A673 (cell line): ENCODE measurements at regions of chr3 and their contacts with region 1.

Region 1: GRCh38 chr3:126134219-126134975 is 46.0 kb downstream of the ALDH1L1 start:
- DNase-seq: peak; percentile 79
- H3K4me3 ChIP-seq: no peak overlapping the region
- H3K27ac ChIP-seq: peak overlapping the region; percentile 44
- H3K4me1 ChIP-seq: peaks cover 14% of the 10 kb centered on the region
- H3K27me3 ChIP-seq: no peaks in the 10 kb centered on the region
- CTCF ChIP-seq: peak; percentile 83

Region 2: GRCh38 chr3:126197854-126198584 is 63.6 kb after region 1 on chr3:
- CTCF ChIA-PET with region 1: interaction called, 4 read pairs
- POLR2A ChIA-PET with region 1: no interaction called
- intact Hi-C with region 1: loop called (anchors 2 kb)
- DNase-seq: peak; percentile 91
- H3K4me3 ChIP-seq: no peak overlapping the region
- H3K27ac ChIP-seq: peak overlapping the region; percentile 8
- H3K4me1 ChIP-seq: peaks cover 37% of the 10 kb centered on the region
- H3K27me3 ChIP-seq: no peaks in the 10 kb centered on the region
- CTCF ChIP-seq: peak; percentile 91

Region 3: DNA sequence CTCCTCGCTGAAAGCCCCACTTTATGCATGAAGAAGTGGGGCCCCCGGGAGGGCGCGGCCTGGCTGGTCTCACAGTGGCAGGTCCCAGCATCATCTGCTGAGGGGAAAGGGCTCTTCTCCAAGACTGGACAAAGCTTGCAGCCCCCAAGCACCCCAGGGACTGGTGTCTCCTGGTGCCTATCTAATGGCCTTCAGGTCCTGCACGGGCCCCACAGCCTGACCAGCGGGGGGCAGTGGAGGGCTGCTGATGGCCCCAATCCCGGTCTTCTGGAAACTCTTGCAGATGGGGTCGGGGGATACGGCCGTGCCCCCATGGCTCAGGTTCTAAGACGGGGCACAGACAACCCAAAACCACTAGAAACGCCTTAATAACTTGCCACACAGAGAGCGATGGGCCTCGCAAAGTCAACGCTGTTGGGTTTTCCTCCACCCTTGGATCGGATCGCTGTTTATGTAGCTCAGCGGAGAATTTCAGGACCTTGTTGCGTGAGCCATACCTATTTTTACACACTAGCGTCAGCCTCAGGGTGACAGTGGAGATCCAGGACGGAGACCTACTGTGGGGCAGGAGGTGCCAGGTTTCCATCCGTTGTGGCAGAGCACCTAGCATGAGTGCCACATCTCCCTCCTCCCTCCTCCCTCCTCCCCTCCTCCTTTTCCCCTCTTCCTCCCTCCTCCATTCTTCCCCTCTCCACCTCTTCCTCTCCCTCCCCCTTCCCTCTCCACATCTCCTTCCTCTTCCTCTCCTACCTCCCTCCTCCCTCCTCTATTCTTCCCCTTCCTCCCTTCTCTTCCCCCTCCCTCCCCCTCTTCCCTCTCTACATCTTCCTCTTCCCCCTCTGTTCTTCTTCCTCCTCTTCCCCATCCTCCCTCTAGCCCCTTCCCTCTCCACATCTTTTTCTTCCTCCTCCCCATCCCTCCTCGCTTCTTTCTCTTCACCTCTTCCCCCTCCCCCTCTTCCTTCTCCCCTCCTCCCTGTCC is 125.3 kb after region 1 on chr3:
- CTCF ChIA-PET with region 1: interaction called, 4 read pairs
- POLR2A ChIA-PET with region 1: no interaction called
- intact Hi-C with region 1: loop called (anchors 1 kb)
- DNase-seq: peak; percentile 76
- H3K4me3 ChIP-seq: no peak overlapping the region
- H3K27ac ChIP-seq: peak overlapping the region; percentile 94
- H3K4me1 ChIP-seq: peaks cover 47% of the 10 kb centered on the region
- H3K27me3 ChIP-seq: no peaks in the 10 kb centered on the region
- CTCF ChIP-seq: peak; percentile 82

Region 4: GRCh38 chr3:126389112-126389793 is 254.9 kb after region 1 on chr3:
- CTCF ChIA-PET with region 1: interaction called, 4 read pairs
- POLR2A ChIA-PET with region 1: no interaction called
- intact Hi-C with region 1: loop called (anchors 1 kb)
- DNase-seq: peak; percentile 80
- H3K4me3 ChIP-seq: no peak overlapping the region
- H3K27ac ChIP-seq: peak overlapping the region; percentile 80
- H3K4me1 ChIP-seq: peaks cover 11% of the 10 kb centered on the region
- H3K27me3 ChIP-seq: no peaks in the 10 kb centered on the region
- CTCF ChIP-seq: peak; percentile 85

Region 5: GRCh38 chr3:127455541-127456450 is 1321.4 kb after region 1 on chr3:
- CTCF ChIA-PET with region 1: no interaction called
- POLR2A ChIA-PET with region 1: no interaction called
- intact Hi-C with region 1: loop called (anchors 10 kb)
- DNase-seq: peak; percentile 81
- H3K4me3 ChIP-seq: peak overlapping the region; percentile 27
- H3K27ac ChIP-seq: no peak overlapping the region
- H3K4me1 ChIP-seq: peaks cover 4% of the 10 kb centered on the region
- H3K27me3 ChIP-seq: peaks cover 56% of the 10 kb centered on the region
- CTCF ChIP-seq: peak; percentile 76